HEK293T (cell line): ENCODE measurements at regions of chr1 and their contacts with region 1.

Region 1: GRCh38 chr1:168082008-168082876 is 54.5 kb downstream of the GPR161 start:
- DNase-seq: peak; percentile 89

Region 2: GRCh38 chr1:167121375-167122120 is 960.7 kb before region 1 on chr1:
- CTCF ChIA-PET with region 1: no interaction called
- POLR2A ChIA-PET with region 1: no interaction called
- DNase-seq: no peak

Region 3: DNA sequence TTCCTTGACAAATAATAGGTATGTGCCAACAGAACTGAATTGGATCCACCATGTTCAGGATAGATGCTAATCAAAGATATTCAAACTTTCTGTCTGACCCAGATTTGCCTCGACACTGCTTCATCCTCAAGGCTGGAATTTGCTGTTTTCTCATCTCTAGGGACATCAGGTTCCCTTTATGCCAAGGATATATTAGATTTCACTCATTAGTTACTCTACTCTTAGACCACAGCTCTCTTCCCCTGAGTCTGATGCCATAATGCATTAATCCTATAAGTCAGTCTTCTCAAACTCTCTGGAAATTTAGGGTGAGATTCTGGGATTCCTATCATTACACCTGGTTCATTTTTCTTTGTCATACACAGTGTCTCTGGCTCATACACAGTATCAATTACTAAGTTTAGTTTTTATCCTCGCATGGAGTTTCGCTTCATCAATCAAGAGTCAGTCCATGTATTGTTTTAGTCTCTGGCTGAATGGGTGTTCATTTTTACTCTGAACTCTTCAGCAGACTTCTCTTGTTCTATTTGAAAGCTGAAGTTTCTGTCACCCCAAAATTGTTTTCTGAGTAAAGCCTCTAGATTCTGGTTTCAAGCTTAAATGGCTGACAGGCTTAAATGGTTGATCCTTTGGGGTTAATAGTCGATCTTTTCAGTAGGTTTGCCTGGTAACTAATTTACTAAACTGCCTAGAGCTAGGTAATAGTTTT is 155.0 kb before region 1 on chr1:
- CTCF ChIA-PET with region 1: interaction called, 11 read pairs
- POLR2A ChIA-PET with region 1: no interaction called
- DNase-seq: no peak

Region 4: DNA sequence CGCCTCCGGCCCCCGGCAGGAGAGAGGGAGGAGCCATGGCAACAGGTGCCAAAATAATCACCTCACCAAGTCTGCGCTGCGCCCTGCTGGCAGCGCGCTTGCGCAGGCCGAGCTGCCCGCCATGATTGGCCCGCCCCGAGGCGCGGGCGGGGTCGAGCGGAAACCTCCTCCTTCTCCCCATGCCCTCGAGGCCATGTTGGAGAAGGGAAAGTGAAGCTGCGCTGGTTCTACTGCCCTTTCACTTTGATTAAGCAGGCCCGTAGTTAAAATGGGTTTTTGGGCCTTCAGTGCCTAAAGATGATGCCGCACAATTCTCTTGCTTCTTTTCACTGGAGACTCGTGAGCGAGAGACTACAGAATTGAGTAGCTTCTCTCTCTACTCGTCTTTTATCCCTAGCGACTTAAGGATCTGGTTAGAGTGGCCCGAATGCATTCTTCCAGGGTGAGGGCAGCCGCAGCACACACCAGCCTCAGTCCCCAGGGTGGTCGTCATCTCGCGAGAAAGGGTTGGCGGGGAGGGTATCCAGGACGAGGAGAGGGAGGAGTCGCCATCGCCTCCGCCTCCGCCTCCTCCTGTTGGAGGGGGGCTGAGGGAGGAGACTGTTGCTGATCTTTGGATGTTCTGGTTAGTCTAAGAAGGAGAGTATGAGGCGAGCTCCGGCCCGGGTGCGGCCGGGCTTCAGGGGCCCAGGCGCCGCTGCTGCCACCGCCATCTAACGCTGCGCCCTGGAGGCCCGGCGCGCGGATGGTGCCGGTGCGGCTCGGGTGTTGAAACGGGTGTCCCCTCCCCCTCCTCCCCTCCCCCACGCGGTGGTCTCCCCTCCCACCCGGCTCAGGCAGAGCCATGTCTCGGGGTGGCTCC is 145.9 kb before region 1 on chr1 and contains the start of gene DCAF6:
- CTCF ChIA-PET with region 1: interaction called, 15 read pairs
- POLR2A ChIA-PET with region 1: interaction called, 14 read pairs
- DNase-seq: peak; percentile 97